ENCODE measurements at regions of chr6 and their contacts with region 1.

Region 1: GRCh38 chr6:130365166-130366106 is at the start of gene TMEM200A:
- DNase-seq: peak; percentile 83
- H3K4me3 ChIP-seq: peak within 1 kb of the TSS; percentile 48 to 78 (median 60)
- H3K27ac ChIP-seq: peak within 1 kb of the TSS in 4 of 8 donors; percentile 10 to 47 (median 28)
- H3K4me1 ChIP-seq: peaks cover 9 to 22% (median 20%) of the 10 kb centered on the region in 6 donors
- H3K27me3 ChIP-seq: peaks cover 0 to 56% (median 28%) of the 10 kb centered on the region in 7 donors
- CTCF ChIP-seq: peak in 9 of 11 experiments; percentile 14 to 68 (median 57)
- POLR2A ChIP-seq: no peak
- total RNA-seq, gene TMEM200A: 0.68 to 2.3 (median 1.8) TPM

Region 2: DNA sequence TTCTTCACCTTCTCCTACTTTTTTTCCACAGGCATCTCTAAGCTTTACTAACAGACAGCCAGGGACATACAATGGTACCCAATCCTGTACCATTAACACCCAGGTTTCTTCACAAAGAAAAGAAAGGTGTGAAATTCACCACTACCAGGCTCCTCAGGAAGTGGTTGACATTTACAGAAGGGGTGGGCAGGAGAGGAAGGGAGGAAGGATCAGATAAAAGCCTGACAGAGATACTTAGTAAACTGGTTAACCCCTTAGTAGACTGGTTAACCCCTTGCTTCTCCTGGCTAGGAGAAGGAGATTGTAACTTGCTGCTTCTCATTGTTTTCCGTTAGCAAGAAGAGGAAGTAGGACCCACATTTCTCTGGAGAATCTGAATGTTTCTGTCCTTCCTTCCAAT is 149.9 kb before region 1 on chr6:
- intact Hi-C with region 1: no loop called
- DNase-seq: no peak
- H3K4me3 ChIP-seq: peak overlapping the region in 5 of 8 donors; percentile 11 to 57 (median 21)
- H3K27ac ChIP-seq: peak overlapping the region in 4 of 8 donors; percentile 31 to 56 (median 50)
- H3K4me1 ChIP-seq: peaks cover 0 to 11% (median 1%) of the 10 kb centered on the region in 6 donors
- H3K27me3 ChIP-seq: no peaks in the 10 kb centered on the region
- CTCF ChIP-seq: no peak
- POLR2A ChIP-seq: no peak

Region 3: DNA sequence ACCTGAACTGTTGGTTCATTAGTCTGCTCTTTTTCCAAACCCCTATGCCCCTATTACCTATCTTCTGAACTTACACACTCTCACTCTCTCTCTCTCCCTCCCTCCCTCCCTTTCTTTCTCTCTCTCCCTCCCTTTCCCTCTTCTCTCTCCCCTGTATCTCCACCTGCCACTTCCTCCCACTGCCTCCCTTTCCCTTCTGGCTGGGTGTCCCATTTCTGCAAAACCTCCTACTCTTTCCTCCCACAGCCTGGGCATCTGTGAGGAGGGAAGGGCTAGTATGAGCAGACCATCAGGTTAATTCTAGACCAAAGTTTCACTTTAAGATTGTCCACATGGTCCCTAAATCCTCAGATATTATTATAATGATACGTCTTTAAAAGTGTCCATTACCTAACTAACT is 95.5 kb after region 1 on chr6:
- intact Hi-C with region 1: loop called (anchors 5 kb)
- DNase-seq: no peak
- H3K4me3 ChIP-seq: no peak overlapping the region
- H3K27ac ChIP-seq: no peak overlapping the region
- H3K4me1 ChIP-seq: no peaks in the 10 kb centered on the region
- H3K27me3 ChIP-seq: no peaks in the 10 kb centered on the region
- CTCF ChIP-seq: no peak
- POLR2A ChIP-seq: no peak

Measured in spleen (tissue), 13 donors.